Tibial artery (tissue), 4 donors: ENCODE measurements at regions of chr12 and their contacts with region 1.

Region 1: DNA sequence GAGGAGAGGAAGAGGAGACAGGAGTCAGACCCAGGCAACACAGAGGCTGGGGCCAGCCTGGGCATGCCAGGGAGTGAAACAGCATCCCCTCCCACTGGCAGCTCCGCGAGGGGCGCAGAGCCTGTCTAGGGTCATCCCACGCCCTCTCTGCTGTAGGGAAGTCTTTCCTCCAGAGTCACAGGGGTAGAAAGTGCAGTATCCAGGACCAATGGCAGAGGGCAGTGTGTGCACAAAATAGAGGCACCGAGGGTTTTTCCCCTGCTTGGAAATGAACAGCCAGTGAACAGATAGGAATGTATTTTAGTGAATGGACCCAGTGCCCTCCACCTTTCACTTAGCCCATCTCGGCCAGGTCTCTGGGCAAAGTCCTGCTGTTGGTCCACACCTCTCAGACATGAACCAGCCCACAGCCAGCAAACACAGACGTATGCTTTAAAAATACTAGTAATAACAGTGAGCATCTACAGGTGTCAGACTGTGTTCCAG is 9.4 kb upstream of the KRT74 start:
- DNase-seq: peak; percentile 38 to 63
- H3K4me3 ChIP-seq: no peak overlapping the region
- H3K27ac ChIP-seq: no peak overlapping the region
- H3K4me1 ChIP-seq: no peaks in the 10 kb centered on the region
- H3K27me3 ChIP-seq: peaks cover 0 to 11% of the 10 kb centered on the region in 2 donors
- CTCF ChIP-seq: peak; percentile 52 to 60

Region 2: DNA sequence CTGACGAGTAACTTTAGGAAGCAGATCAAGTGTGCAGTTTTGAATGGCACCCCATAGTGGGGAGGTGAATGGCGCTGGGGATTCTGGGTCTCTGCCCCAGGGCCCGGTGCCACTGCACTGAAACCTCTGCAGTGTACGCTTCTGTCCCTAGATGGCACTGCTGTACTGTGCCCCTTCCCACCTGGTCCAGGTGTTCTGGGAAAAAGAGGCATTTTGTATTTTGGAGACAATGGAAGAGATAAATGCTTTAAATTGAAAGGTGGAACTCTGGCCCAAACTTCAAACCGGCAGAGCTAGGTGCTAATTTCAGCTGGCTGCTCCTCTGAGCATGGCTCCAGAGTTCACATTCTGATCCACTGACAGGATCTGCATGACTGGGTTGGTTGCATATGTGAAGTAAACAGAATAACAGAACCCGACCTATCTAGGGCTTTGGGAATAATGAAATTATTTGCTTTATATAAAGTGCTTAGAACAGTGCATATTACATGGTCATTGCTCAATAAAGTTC is 443.4 kb before region 1 on chr12:
- intact Hi-C with region 1: loop called (anchors 10 kb)
- DNase-seq: no peak
- H3K4me3 ChIP-seq: no peak overlapping the region
- H3K27ac ChIP-seq: no peak overlapping the region
- H3K4me1 ChIP-seq: peaks cover 0 to 13% (median 0%) of the 10 kb centered on the region in 4 donors
- H3K27me3 ChIP-seq: peaks cover 0 to 13% of the 10 kb centered on the region in 2 donors
- CTCF ChIP-seq: peak in 1 of 2 experiments; percentile 32

Region 3: GRCh38 chr12:52380271-52380694 is 202.7 kb before region 1 on chr12:
- intact Hi-C with region 1: loop called (anchors 10 kb)
- DNase-seq: no peak
- H3K4me3 ChIP-seq: no peak overlapping the region
- H3K27ac ChIP-seq: no peak overlapping the region
- H3K4me1 ChIP-seq: no peaks in the 10 kb centered on the region
- H3K27me3 ChIP-seq: peaks cover 0 to 10% of the 10 kb centered on the region in 2 donors
- CTCF ChIP-seq: peak in 1 of 2 experiments; percentile 14

Region 4: DNA sequence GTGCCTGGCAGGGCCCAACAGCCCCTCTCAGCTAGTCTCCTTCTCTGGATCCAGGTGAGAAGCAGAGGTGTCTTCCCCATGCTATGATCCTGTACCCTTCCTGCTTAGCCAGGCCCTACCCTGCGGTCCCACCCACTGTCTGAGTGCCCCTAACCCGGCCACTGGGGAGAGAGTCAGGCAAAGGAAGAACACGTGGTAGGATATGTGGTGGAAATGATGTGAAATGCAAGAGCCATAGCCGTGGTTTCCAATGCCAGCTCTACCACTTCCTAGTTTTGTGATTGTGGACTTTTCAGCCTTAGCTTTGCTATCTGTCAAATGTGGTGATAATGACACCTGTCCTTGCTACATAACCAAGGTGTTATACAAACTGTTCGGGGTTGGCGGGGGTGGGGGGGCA is 53.2 kb after region 1 on chr12:
- intact Hi-C with region 1: no loop called
- DNase-seq: peak in 1 of 2 donors; percentile 28
- H3K4me3 ChIP-seq: no peak overlapping the region
- H3K27ac ChIP-seq: no peak overlapping the region
- H3K4me1 ChIP-seq: peaks cover 0 to 3% (median 0%) of the 10 kb centered on the region in 4 donors
- H3K27me3 ChIP-seq: peaks cover 0 to 2% of the 10 kb centered on the region in 2 donors
- CTCF ChIP-seq: no peak

Region 5: DNA sequence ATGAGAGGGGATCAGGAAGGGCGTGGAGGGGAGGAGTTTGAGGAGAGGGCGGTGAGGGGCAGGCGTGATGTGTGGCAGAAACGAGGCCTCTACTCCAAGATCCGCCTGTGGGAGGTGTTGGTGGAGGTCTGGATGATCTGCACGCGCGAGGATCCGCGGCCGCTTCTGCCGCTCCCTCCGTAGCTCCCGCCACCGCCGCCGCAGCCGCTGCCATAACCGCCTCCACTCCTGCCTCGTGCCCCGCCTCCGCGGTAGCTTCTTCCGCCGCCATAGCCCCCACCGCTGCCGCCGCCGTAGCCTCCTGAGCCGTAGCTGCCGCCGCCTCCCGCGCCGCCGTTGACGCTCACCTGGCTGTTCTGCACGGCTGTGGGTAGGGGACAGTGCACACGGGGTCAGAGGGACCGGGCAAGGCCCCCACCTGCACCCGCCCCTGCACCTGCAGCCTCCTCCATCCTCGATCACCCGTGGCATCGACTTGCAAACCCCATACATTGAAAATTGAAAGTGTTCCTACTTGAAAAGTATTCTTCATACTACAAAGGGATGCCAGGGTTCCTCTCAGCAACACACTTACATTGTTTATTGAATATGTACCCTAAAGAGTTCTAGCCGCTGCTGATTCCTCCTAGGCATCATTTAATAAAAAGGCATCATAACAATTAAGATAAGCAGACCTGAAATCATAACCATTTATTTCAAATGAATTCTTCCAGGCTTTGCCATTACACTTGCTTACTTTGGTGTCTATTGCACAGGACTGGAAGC is 108.2 kb after region 1 on chr12:
- intact Hi-C with region 1: no loop called
- DNase-seq: no peak
- H3K4me3 ChIP-seq: peak overlapping the region in 1 of 2 donors; percentile 33
- H3K27ac ChIP-seq: no peak overlapping the region
- H3K4me1 ChIP-seq: peaks cover 0 to 11% (median 6%) of the 10 kb centered on the region in 4 donors
- H3K27me3 ChIP-seq: peaks cover 0 to 78% of the 10 kb centered on the region in 2 donors
- CTCF ChIP-seq: no peak

Region 6: GRCh38 chr12:52879394-52880351 is 296.7 kb after region 1 on chr12:
- intact Hi-C with region 1: loop called (anchors 1 kb)
- DNase-seq: peak; percentile 69 to 86
- H3K4me3 ChIP-seq: peak overlapping the region; percentile 17 to 28
- H3K27ac ChIP-seq: peak overlapping the region in 1 of 2 donors; percentile 5
- H3K4me1 ChIP-seq: peaks cover 0 to 22% (median 10%) of the 10 kb centered on the region in 4 donors
- H3K27me3 ChIP-seq: peaks cover 0 to 3% of the 10 kb centered on the region in 2 donors
- CTCF ChIP-seq: peak; percentile 66 to 90

Region 7: DNA sequence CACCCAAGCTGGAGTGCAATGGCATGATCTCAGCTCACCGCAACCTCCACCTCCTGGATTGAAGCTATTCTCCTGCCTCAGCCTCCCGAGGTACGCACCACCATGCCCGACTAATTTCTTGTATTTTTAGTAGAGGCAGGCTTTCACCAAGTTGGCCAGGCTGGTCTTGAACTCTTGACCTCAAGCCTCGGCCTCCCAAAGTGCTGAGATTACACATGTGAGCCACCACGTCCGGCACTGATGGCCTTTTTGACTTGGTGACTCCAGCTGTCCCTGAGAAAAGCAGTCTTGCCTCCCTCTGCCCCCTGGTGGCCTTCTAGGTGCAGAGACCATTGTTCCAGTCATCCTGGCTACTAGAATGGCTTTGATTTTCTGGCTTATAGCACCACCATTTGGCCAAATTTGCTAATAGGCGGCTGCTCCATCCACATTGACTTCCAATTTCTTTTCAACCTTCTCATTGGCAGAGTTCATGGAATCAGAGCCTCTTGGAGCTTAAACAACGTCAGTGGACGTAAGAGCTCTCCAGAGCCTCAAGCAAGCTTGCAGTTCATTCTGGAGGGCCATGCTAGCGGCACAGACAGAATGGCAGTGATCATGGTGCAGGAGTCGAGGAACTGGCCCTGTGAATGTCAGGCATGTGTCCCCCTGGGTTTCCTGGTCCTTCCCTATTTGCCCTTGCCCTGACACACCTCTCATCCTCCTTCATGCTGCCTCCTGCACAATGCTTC is 397.8 kb after region 1 on chr12:
- intact Hi-C with region 1: loop called (anchors 10 kb)
- DNase-seq: peak; percentile 89 to 90
- H3K4me3 ChIP-seq: no peak overlapping the region
- H3K27ac ChIP-seq: no peak overlapping the region
- H3K4me1 ChIP-seq: peaks cover 0 to under 1% (median 0%) of the 10 kb centered on the region in 4 donors
- H3K27me3 ChIP-seq: peaks cover 0 to 3% of the 10 kb centered on the region in 2 donors
- CTCF ChIP-seq: peak; percentile 89 to 99